CD4-positive, alpha-beta T cell (primary cell): ENCODE measurements at regions of chr12 and their contacts with region 1.

Region 1: GRCh38 chr12:6851921-6852650 is at the start of gene USP5:
- DNase-seq: peak; percentile 94 to 100 (median 97)
- ATAC-seq: peak; percentile 77
- H3K4me3 ChIP-seq: peak within 1 kb of the TSS; percentile 73
- H3K4me3 Mint-ChIP-seq: peak within 1 kb of the TSS; percentile 91
- H3K27ac ChIP-seq: peak within 1 kb of the TSS; percentile 89 to 95
- H3K27ac Mint-ChIP-seq: peak within 1 kb of the TSS; percentile 87
- H3K4me1 ChIP-seq: peaks cover 42% of the 10 kb centered on the region
- H3K4me1 Mint-ChIP-seq: peaks cover 29% of the 10 kb centered on the region
- H3K27me3 ChIP-seq: no peaks in the 10 kb centered on the region
- H3K27me3 Mint-ChIP-seq: no peaks in the 10 kb centered on the region
- CTCF ChIP-seq: no peak
- total RNA-seq, gene USP5: 31.8 to 33.4 TPM

Region 2: GRCh38 chr12:6752921-6753771 is 98.9 kb before region 1 on chr12 and contains the start of gene MLF2:
- CTCF ChIA-PET with region 1: interaction called, 4 read pairs
- POLR2A ChIA-PET with region 1: interaction called, 26 read pairs
- intact Hi-C with region 1: no loop called
- DNase-seq: peak; percentile 94 to 99 (median 96)
- ATAC-seq: peak; percentile 92
- H3K4me3 ChIP-seq: peak within 1 kb of the TSS; percentile 80
- H3K4me3 Mint-ChIP-seq: peak within 1 kb of the TSS; percentile 96
- H3K27ac ChIP-seq: peak within 1 kb of the TSS; percentile 86 to 96
- H3K27ac Mint-ChIP-seq: peak within 1 kb of the TSS; percentile 100
- H3K4me1 ChIP-seq: peaks cover 24% of the 10 kb centered on the region
- H3K4me1 Mint-ChIP-seq: peaks cover 19% of the 10 kb centered on the region
- H3K27me3 ChIP-seq: no peaks in the 10 kb centered on the region
- H3K27me3 Mint-ChIP-seq: no peaks in the 10 kb centered on the region
- CTCF ChIP-seq: peak; percentile 79
- total RNA-seq, gene MLF2: 114 to 121 TPM

Region 3: DNA sequence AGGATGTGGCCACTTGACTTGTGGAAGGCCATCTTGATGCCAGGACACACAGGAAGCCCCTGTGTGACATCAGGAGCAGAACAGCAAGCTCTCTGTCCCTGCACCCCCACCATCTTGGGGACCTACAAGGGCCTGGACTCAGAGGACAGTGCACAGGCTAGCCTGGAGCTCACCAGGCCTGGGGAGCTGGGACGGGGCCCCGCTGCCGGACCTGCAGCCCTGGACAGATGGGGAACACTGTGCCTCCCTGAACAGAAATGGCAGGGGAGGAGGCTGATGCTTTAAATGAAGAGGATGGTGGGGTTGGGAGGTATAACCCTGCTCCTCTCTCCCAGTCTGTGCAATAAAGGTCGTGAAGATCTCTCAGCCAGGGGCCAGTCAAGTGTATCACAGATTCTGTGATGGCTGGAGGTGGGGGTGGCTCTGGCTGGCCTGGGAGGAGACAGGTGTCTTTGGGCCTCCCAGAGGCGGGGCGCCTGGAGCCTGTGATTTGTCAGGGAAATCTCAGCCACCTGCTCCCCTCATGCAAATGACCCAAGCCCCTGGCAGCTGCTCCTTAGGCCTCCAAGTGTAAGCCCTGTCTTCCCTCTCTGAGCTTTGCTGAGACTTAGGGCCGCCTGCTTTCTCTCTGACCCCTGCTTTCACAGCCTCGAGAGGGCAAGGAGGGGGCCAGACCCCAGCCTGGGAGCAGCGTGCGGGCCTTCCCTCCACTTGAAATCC is 12.4 kb before region 1 on chr12:
- CTCF ChIA-PET with region 1: interaction called, 11 read pairs
- POLR2A ChIA-PET with region 1: interaction called, 13 read pairs
- intact Hi-C with region 1: no loop called
- DNase-seq: no peak
- ATAC-seq: no peak
- H3K4me3 ChIP-seq: no peak overlapping the region
- H3K4me3 Mint-ChIP-seq: no peak overlapping the region
- H3K27ac ChIP-seq: no peak overlapping the region
- H3K27ac Mint-ChIP-seq: no peak overlapping the region
- H3K4me1 ChIP-seq: peaks cover 5% of the 10 kb centered on the region
- H3K4me1 Mint-ChIP-seq: peaks cover 6% of the 10 kb centered on the region
- H3K27me3 ChIP-seq: no peaks in the 10 kb centered on the region
- H3K27me3 Mint-ChIP-seq: no peaks in the 10 kb centered on the region
- CTCF ChIP-seq: no peak

Region 4: DNA sequence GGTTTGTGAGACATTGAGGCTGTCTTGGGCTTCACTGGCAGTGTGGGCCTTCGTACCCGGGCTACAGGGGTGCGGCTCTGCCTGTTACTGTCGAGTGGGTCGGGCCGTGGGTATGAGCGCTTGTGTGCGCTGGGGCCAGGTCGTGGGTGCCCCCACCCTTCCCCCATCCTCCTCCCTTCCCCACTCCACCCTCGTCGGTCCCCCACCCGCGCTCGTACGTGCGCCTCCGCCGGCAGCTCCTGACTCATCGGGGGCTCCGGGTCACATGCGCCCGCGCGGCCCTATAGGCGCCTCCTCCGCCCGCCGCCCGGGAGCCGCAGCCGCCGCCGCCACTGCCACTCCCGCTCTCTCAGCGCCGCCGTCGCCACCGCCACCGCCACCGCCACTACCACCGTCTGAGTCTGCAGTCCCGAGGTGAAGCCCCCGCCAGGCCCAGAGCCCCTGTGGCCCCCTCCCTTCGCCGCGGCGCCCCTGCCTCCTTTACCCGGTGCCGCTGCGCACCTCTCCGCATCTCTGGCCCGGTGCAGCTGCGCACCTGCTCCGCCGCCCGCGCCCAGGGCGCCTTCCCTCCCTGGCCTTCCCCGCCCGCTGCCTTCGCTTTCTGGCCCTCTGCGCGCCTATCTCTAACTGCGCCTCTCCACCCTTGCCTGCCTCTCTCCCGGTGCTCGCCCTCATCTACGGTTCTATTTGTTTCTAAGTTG is 62.3 kb after region 1 on chr12 and contains the start of gene ENO2:
- CTCF ChIA-PET with region 1: no interaction called
- POLR2A ChIA-PET with region 1: interaction called, 18 read pairs
- intact Hi-C with region 1: no loop called
- DNase-seq: peak; percentile 72 to 93 (median 86)
- ATAC-seq: peak; percentile 93
- H3K4me3 ChIP-seq: peak within 1 kb of the TSS; percentile 65
- H3K4me3 Mint-ChIP-seq: peak within 1 kb of the TSS; percentile 94
- H3K27ac ChIP-seq: peak within 1 kb of the TSS; percentile 84 to 90
- H3K27ac Mint-ChIP-seq: peak within 1 kb of the TSS; percentile 82
- H3K4me1 ChIP-seq: peaks cover 32% of the 10 kb centered on the region
- H3K4me1 Mint-ChIP-seq: peaks cover 31% of the 10 kb centered on the region
- H3K27me3 ChIP-seq: no peaks in the 10 kb centered on the region
- H3K27me3 Mint-ChIP-seq: no peaks in the 10 kb centered on the region
- CTCF ChIP-seq: no peak
- total RNA-seq, gene ENO2: 85.6 to 103 TPM

Region 5: DNA sequence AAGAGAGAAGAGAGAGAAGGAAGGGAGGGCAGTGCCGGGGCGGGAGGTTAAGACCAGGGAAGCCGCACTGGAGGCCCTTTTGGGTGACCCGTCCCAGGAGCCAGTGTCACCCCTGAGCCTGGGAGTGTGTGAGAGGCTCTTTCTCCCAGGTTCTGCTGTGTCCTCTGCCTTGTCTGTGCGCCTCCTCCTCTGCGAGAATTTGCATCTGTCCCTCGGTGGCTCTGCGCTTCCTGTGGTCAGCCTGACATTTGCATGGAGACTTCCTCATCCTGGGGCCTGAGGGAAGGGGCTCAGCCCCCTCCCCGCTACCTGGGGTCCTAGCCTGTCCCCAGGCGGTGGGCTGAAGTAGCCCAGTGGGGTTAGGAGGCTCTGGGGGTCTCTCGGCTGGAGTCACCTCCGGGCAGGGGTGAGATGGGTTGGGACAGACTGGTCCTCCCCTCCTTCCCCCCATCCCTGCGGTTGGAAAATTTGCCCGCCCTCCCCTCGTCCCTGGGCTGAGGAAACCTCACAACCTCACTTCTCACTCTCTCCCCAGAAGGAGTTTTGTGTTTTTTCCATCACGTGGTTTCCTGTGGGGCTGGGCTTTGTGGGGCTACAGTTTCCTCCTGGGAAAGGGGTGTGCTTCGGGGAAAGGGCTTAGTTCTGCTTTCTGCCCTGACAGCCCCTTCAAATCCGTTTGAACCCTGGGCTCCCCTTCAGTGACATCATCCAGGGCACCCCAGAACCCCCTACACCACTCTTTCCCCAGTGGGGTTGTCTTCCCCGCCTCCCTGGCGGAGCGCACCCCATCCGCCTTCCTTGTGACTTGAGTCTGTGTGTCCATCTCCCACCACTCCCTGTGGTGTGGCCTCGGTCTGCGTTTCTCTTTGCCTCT is 101.6 kb after region 1 on chr12:
- CTCF ChIA-PET with region 1: no interaction called
- POLR2A ChIA-PET with region 1: interaction called, 5 read pairs
- intact Hi-C with region 1: loop called in 1 of 2 experiments (anchors 5 kb)
- DNase-seq: peak in 13 of 14 experiments; percentile 50 to 90 (median 69)
- ATAC-seq: peak; percentile 45
- H3K4me3 ChIP-seq: peak overlapping the region; percentile 98
- H3K4me3 Mint-ChIP-seq: peak overlapping the region; percentile 100
- H3K27ac ChIP-seq: peak overlapping the region; percentile 80 to 96
- H3K27ac Mint-ChIP-seq: peak overlapping the region; percentile 97
- H3K4me1 ChIP-seq: peaks cover 94% of the 10 kb centered on the region
- H3K4me1 Mint-ChIP-seq: peaks cover 89% of the 10 kb centered on the region
- H3K27me3 ChIP-seq: no peaks in the 10 kb centered on the region
- H3K27me3 Mint-ChIP-seq: no peaks in the 10 kb centered on the region
- CTCF ChIP-seq: no peak